Common myeloid progenitor, CD34-positive (primary cell): ENCODE measurements at regions of chr18 and their contacts with region 1.

Region 1: DNA sequence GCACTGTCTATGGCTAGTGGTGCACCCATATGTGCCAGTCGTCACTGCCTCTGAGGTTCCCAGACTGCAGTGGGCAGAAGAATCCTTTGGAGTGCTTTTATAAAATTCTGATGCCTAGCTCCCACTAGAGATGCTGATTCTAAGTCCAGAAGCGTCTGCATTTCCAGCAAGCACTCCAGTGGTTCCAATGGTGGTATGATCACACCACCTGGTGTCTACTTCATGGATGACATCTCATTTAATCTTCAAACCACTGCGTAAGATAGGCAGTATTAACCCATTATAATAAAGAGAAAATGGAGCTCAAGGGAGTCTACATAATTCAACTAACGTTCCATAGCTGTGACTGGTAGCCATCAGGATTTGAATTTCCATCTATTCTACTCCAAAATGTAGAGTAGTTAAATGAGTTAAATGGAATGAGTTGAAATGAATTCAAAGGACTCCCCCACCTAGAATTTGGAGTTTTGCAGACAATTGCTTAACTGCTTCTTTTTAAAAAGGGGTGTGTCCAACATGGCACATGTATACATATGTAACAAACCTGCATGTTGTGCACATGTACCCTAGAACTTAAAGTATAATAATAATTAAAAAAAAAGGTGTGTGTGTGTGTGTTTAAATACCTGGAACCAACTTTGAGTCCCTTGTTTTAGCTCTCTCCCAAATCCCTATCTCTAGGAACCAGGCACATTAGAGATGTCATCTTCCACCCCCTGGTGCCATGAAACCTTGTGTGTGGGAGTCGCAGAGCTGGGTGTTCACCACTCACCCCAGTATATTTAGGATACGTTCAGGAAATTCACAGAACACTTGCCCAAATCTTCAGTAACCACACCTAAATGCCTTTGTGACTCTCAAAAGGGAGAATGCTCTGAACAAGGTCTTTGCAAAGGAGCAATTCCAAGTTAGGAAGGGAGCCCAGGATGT is 14.1 kb downstream of the LAMA3 start:
- DNase-seq: peak; percentile 58 to 81 (median 79)
- H3K4me3 ChIP-seq: no peak overlapping the region
- H3K27ac ChIP-seq: no peak overlapping the region
- H3K4me1 ChIP-seq: peaks cover 0 to 8% (median 2%) of the 10 kb centered on the region in 4 experiments
- H3K27me3 ChIP-seq: no peaks in the 10 kb centered on the region

Region 2: GRCh38 chr18:23523429-23524220 is 179.7 kb before region 1 on chr18:
- CTCF ChIA-PET with region 1: interaction called, 10 read pairs
- POLR2A ChIA-PET with region 1: no interaction called
- DNase-seq: no peak
- H3K4me3 ChIP-seq: no peak overlapping the region
- H3K27ac ChIP-seq: no peak overlapping the region
- H3K4me1 ChIP-seq: no peaks in the 10 kb centered on the region
- H3K27me3 ChIP-seq: no peaks in the 10 kb centered on the region

Region 3: DNA sequence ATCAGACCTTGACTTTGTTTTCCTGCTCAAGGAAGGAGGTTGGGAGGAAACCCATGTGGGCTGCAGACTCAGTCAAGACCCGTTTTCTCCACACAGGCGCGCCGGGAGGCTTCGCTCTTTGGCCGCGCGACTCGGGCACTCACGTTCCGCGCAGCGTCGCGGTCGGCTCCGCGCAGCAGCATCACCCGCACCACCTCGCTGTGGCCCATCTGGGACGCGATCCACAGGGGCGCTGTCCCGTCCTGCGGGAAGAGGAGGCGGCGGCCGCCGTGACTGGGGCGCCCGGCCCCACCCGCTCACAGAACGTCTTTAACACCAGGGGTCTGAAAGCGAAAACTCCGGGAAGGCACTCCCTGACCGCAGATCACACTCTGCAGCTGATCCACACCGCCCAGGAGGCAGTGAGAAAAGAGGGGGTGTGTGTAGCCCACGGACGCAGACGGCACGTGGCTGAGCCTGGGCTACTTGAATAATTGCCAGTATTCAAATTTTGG is 83.9 kb before region 1 on chr18:
- CTCF ChIA-PET with region 1: interaction called, 94 read pairs
- POLR2A ChIA-PET with region 1: interaction called, 3 read pairs
- DNase-seq: peak; percentile 38 to 66 (median 56)
- H3K4me3 ChIP-seq: peak overlapping the region in 6 of 7 experiments; percentile 48 to 73 (median 66)
- H3K27ac ChIP-seq: no peak overlapping the region
- H3K4me1 ChIP-seq: peaks cover 2 to 20% (median 15%) of the 10 kb centered on the region in 4 experiments
- H3K27me3 ChIP-seq: peaks cover 0 to 15% (median 12%) of the 10 kb centered on the region in 5 experiments

Region 4: DNA sequence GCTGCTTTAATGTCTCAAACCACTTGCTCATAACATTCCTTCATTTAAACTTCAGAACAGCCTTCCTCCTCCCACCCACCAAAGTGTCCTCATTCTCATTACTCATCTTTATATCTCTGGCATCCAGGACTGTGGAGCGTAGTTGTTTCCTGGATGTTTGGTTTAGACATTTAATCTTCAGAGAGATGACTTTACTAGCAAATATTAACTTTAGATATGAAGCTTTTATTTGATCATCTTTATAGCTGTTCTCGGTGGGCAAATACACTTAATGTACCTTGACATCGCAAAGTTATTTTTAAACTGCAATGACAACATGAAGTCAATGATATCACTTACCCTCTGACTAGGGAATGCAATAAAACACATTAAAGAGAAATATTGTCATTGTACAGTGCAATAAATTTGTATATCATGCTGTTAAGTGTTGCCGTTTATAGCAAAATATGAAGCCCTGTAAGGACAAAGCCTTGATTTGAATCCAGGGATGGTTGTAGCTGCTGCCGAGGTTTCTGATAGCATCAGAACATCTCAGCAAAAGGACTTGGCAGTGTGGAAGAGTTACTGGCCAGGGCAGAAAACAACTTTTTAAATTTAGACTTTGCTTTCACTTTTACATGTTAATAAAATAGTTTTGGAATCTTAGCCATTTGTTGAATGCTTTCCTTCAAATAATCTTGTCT is 18.7 kb before region 1 on chr18:
- CTCF ChIA-PET with region 1: interaction called, 13 read pairs
- POLR2A ChIA-PET with region 1: no interaction called
- DNase-seq: no peak
- H3K4me3 ChIP-seq: no peak overlapping the region
- H3K27ac ChIP-seq: no peak overlapping the region
- H3K4me1 ChIP-seq: peaks cover 3 to 11% (median 10%) of the 10 kb centered on the region in 4 experiments
- H3K27me3 ChIP-seq: peaks cover 7 to 30% (median 10%) of the 10 kb centered on the region in 5 experiments

Region 5: GRCh38 chr18:23690505-23691068 is 12.7 kb before region 1 on chr18:
- CTCF ChIA-PET with region 1: interaction called, 21 read pairs
- POLR2A ChIA-PET with region 1: interaction called, 4 read pairs
- DNase-seq: peak in 2 of 3 donors; percentile 44 to 59
- H3K4me3 ChIP-seq: peak overlapping the region in 2 of 7 experiments; percentile 67 to 75
- H3K27ac ChIP-seq: no peak overlapping the region
- H3K4me1 ChIP-seq: peaks cover 3 to 20% (median 17%) of the 10 kb centered on the region in 4 experiments
- H3K27me3 ChIP-seq: peaks cover 7 to 38% (median 10%) of the 10 kb centered on the region in 5 experiments

Region 6: GRCh38 chr18:23719634-23720201 is 16.4 kb after region 1 on chr18:
- CTCF ChIA-PET with region 1: interaction called, 11 read pairs
- POLR2A ChIA-PET with region 1: no interaction called
- DNase-seq: no peak
- H3K4me3 ChIP-seq: no peak overlapping the region
- H3K27ac ChIP-seq: no peak overlapping the region
- H3K4me1 ChIP-seq: peaks cover 3 to 5% (median 4%) of the 10 kb centered on the region in 4 experiments
- H3K27me3 ChIP-seq: no peaks in the 10 kb centered on the region

Region 7: DNA sequence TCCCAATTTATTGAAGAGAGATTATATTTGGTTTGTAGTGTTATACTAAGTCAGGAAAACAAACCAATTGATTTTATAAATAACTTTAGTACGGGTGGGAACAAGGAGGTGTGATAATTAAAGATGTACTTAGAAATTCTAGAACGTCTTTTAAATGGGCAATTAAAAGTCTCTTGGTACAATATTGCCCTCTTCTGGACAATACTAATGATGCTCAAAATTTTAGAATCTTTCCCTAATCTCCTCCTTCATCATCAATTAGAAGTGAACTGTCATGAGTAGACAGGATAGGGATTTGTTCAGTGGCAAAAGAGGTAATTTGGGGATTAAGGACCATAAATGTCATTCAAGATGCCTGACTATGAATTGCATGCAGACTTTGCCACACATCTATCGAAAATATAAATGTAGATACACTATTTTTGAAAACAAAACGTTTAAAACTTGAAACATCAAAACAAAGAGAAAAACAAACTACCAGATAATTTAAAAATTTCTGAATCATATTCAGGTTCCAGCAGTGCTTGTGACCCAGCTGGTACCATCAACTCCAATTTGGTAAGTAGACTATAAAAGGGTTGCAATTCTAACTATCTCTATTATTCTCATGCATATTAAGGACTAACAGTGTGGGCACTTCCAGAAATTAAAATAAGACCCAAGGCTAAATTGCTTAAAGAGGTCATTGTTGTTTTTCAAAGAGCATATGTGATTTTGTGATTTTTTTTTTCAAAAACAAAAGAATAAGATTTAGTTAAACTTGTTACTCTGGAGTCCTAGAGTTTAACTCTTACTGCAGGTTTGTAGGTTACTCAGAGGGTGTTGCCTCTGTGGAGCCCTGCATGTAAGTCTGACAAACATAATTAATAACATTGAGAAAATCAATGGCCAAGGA is 109.5 kb after region 1 on chr18:
- CTCF ChIA-PET with region 1: interaction called, 18 read pairs
- POLR2A ChIA-PET with region 1: no interaction called
- DNase-seq: peak; percentile 32 to 59 (median 42)
- H3K4me3 ChIP-seq: no peak overlapping the region
- H3K27ac ChIP-seq: no peak overlapping the region
- H3K4me1 ChIP-seq: peaks cover 0 to 13% (median 3%) of the 10 kb centered on the region in 4 experiments
- H3K27me3 ChIP-seq: no peaks in the 10 kb centered on the region